T-cell (primary cell): ENCODE measurements at regions of chr1 and their contacts with region 1.

Region 1: GRCh38 chr1:27527223-27527889 is 37.4 kb upstream of the WASF2 start:
- DNase-seq: peak in 34 of 35 experiments; percentile 24 to 82 (median 63)
- ATAC-seq: peak in 2 of 4 experiments; percentile 6 to 35
- H3K4me3 ChIP-seq: peak overlapping the region; percentile 27 to 60
- H3K4me3 Mint-ChIP-seq: peak overlapping the region; percentile 35 to 94 (median 61)
- H3K27ac ChIP-seq: peak overlapping the region; percentile 68
- H3K27ac Mint-ChIP-seq: peak overlapping the region; percentile 98 to 99
- H3K4me1 ChIP-seq: peaks cover 36 to 75% of the 10 kb centered on the region in 2 experiments
- H3K4me1 Mint-ChIP-seq: peaks cover 64 to 69% (median 68%) of the 10 kb centered on the region in 3 donors
- H3K27me3 ChIP-seq: peaks cover 0 to 16% of the 10 kb centered on the region in 2 experiments
- H3K27me3 Mint-ChIP-seq: no peaks in the 10 kb centered on the region

Region 2: GRCh38 chr1:27332536-27333281 is 194.6 kb before region 1 on chr1:
- CTCF ChIA-PET with region 1: no interaction called
- POLR2A ChIA-PET with region 1: no interaction called
- DNase-seq: peak in 32 of 35 experiments; percentile 20 to 80 (median 48)
- ATAC-seq: peak; percentile 73 to 91 (median 80)
- H3K4me3 ChIP-seq: no peak overlapping the region
- H3K4me3 Mint-ChIP-seq: peak overlapping the region in 1 of 3 donors; percentile 5
- H3K27ac ChIP-seq: peak overlapping the region; percentile 32
- H3K27ac Mint-ChIP-seq: peak overlapping the region; percentile 44 to 75
- H3K4me1 ChIP-seq: peaks cover 3 to 24% of the 10 kb centered on the region in 2 experiments
- H3K4me1 Mint-ChIP-seq: peaks cover 36 to 43% (median 38%) of the 10 kb centered on the region in 3 donors
- H3K27me3 ChIP-seq: no peaks in the 10 kb centered on the region
- H3K27me3 Mint-ChIP-seq: no peaks in the 10 kb centered on the region

Region 3: GRCh38 chr1:27430903-27431600 is 96.3 kb before region 1 on chr1:
- CTCF ChIA-PET with region 1: interaction called, 3 read pairs
- POLR2A ChIA-PET with region 1: interaction called in 1 of 2 experiments, 11 read pairs
- DNase-seq: peak in 27 of 35 experiments; percentile 5 to 66 (median 17)
- ATAC-seq: peak; percentile 83 to 92 (median 88)
- H3K4me3 ChIP-seq: peak overlapping the region in 1 of 2 donors; percentile 40
- H3K4me3 Mint-ChIP-seq: peak overlapping the region; percentile 31 to 74 (median 64)
- H3K27ac ChIP-seq: peak overlapping the region; percentile 45
- H3K27ac Mint-ChIP-seq: peak overlapping the region; percentile 88 to 91
- H3K4me1 ChIP-seq: peaks cover 60 to 80% of the 10 kb centered on the region in 2 experiments
- H3K4me1 Mint-ChIP-seq: peaks cover 85 to 88% (median 85%) of the 10 kb centered on the region in 3 donors
- H3K27me3 ChIP-seq: no peaks in the 10 kb centered on the region
- H3K27me3 Mint-ChIP-seq: no peaks in the 10 kb centered on the region

Region 4: GRCh38 chr1:27539901-27540861 is 12.8 kb after region 1 on chr1:
- CTCF ChIA-PET with region 1: no interaction called
- POLR2A ChIA-PET with region 1: no interaction called
- DNase-seq: no peak
- ATAC-seq: no peak
- H3K4me3 ChIP-seq: no peak overlapping the region
- H3K4me3 Mint-ChIP-seq: no peak overlapping the region
- H3K27ac ChIP-seq: no peak overlapping the region
- H3K27ac Mint-ChIP-seq: peak overlapping the region in 1 of 2 donors; percentile 65
- H3K4me1 ChIP-seq: no peaks in the 10 kb centered on the region
- H3K4me1 Mint-ChIP-seq: peaks cover 10 to 24% (median 13%) of the 10 kb centered on the region in 3 donors
- H3K27me3 ChIP-seq: no peaks in the 10 kb centered on the region
- H3K27me3 Mint-ChIP-seq: no peaks in the 10 kb centered on the region